Left colon (tissue), 2 donors: ENCODE measurements at regions of chr3 and their contacts with region 1.

Region 1: GRCh38 chr3:14508961-14509795 is 31.0 kb downstream of the GRIP2 start:
- DNase-seq: peak in 1 of 2 donors; percentile 69
- ATAC-seq: peak; percentile 74

Region 2: DNA sequence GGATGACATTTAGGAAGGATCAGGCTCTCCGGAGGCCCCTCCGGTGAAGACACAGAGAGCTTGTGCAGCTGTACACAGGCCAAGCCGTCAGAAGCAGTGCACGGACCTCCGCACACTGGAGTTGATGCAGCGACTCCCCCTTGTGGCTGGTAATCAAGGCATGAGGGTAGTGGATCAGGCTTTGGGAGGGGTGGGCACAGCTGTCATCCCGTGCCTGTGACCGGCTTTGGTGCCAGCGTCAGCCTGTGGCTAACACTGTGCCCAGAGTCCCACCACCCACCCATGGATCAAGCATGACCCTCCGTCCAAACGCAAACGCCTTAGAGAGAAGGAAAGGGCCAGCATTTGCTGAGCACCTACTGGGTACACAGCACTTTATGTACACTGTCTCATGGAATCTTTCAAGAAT is 39.1 kb after region 1 on chr3:
- intact Hi-C with region 1: loop called in 1 of 2 experiments (anchors 5 kb)
- DNase-seq: peak; percentile 43 to 66
- ATAC-seq: peak; percentile 86

Region 3: GRCh38 chr3:14561051-14561960 is 52.1 kb after region 1 on chr3:
- intact Hi-C with region 1: no loop called
- DNase-seq: no peak
- ATAC-seq: no peak

Region 4: GRCh38 chr3:14915636-14916222 is 406.6 kb after region 1 on chr3:
- intact Hi-C with region 1: loop called in 1 of 2 experiments (anchors 10 kb)
- DNase-seq: no peak
- ATAC-seq: peak; percentile 67